ENCODE measurements at regions of chr7 and their contacts with region 1.

Region 1: GRCh38 chr7:64562626-64563275 is at the start of gene ZNF680:
- DNase-seq: peak; percentile 95
- H3K4me3 ChIP-seq: peak within 1 kb of the TSS; percentile 61
- H3K27ac ChIP-seq: peak within 1 kb of the TSS; percentile 78
- H3K4me1 ChIP-seq: no peaks in the 10 kb centered on the region
- H3K27me3 ChIP-seq: no peaks in the 10 kb centered on the region
- CTCF ChIP-seq: no peak
- total RNA-seq, gene ZNF680: 10.2 and 13.0 TPM in 2 replicates

Region 2: GRCh38 chr7:64206903-64207302 is 355.8 kb before region 1 on chr7 and contains the start of gene ZNF735:
- CTCF ChIA-PET with region 1: no interaction called
- POLR2A ChIA-PET with region 1: no interaction called
- intact Hi-C with region 1: no loop called
- DNase-seq: no peak
- H3K4me3 ChIP-seq: no peak within 1 kb of the TSS
- H3K27ac ChIP-seq: no peak within 1 kb of the TSS
- H3K4me1 ChIP-seq: no peaks in the 10 kb centered on the region
- H3K27me3 ChIP-seq: no peaks in the 10 kb centered on the region
- CTCF ChIP-seq: no peak
- total RNA-seq, gene ZNF735: not detected in 2 replicates

Region 3: GRCh38 chr7:64665980-64666662 is 103.4 kb after region 1 on chr7 and contains the start of gene ZNF107:
- CTCF ChIA-PET with region 1: no interaction called
- POLR2A ChIA-PET with region 1: no interaction called
- intact Hi-C with region 1: loop called (anchors 2 kb)
- DNase-seq: peak; percentile 91
- H3K4me3 ChIP-seq: peak within 1 kb of the TSS; percentile 99
- H3K27ac ChIP-seq: peak within 1 kb of the TSS; percentile 86
- H3K4me1 ChIP-seq: peaks cover 12% of the 10 kb centered on the region
- H3K27me3 ChIP-seq: no peaks in the 10 kb centered on the region
- CTCF ChIP-seq: no peak
- total RNA-seq, gene ZNF107: 8.3 and 9.8 TPM in 2 replicates